ENCODE measurements at regions of chr18 and their contacts with region 1.

Region 1: GRCh38 chr18:13549880-13550232 is 176.5 kb downstream of the FAM210A start:
- DNase-seq: no peak
- H3K4me3 ChIP-seq: no peak overlapping the region
- H3K27ac ChIP-seq: peak overlapping the region in 1 of 2 donors; percentile 9
- H3K4me1 ChIP-seq: peaks cover 6 to 19% of the 10 kb centered on the region in 2 donors
- H3K27me3 ChIP-seq: no peaks in the 10 kb centered on the region
- CTCF ChIP-seq: no peak

Region 2: DNA sequence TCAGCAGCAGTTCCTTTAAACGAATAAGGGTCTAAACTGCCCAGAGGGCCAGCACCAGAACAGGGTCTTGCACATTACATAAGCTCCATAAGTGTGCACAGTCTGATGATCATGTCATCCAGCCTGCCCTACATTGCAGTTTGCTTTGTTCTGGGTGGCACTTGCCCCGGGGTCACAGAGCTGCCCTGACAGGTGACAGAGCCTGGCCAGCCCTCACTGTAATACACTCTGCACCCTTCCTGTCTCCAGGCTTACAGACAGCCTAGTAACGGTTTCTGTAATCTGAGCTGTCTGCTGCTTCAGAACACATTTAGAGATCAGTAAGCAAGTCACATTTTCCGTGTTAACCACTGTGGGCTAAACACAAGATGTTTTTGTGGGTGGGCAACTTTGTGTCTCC is 36.8 kb before region 1 on chr18:
- intact Hi-C with region 1: no loop called
- DNase-seq: peak in 1 of 2 donors; percentile 58
- H3K4me3 ChIP-seq: no peak overlapping the region
- H3K27ac ChIP-seq: peak overlapping the region in 1 of 2 donors; percentile 17
- H3K4me1 ChIP-seq: peaks cover 0 to 14% of the 10 kb centered on the region in 2 donors
- H3K27me3 ChIP-seq: no peaks in the 10 kb centered on the region
- CTCF ChIP-seq: no peak

Region 3: DNA sequence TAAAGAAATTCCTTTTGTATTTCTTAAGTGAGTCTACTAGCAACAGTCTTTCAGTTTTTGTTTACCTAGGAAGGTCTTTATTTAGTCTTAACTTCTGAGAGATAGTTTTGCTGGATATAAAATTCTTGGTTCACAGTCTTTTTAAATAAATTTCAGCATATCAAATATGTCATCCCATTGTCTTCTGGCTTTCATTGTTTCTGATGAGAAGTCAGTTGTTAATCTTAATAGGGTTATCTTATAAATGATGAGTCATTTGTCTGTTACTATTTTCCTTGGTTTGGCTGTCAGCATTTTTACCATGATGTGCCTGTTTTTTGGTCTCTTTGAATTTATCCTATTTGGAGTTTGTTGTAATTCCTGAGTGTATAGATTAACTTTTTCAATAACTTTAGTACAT is 47.2 kb after region 1 on chr18:
- intact Hi-C with region 1: no loop called
- DNase-seq: no peak
- H3K4me3 ChIP-seq: no peak overlapping the region
- H3K27ac ChIP-seq: no peak overlapping the region
- H3K4me1 ChIP-seq: no peaks in the 10 kb centered on the region
- H3K27me3 ChIP-seq: no peaks in the 10 kb centered on the region
- CTCF ChIP-seq: no peak

Region 4: DNA sequence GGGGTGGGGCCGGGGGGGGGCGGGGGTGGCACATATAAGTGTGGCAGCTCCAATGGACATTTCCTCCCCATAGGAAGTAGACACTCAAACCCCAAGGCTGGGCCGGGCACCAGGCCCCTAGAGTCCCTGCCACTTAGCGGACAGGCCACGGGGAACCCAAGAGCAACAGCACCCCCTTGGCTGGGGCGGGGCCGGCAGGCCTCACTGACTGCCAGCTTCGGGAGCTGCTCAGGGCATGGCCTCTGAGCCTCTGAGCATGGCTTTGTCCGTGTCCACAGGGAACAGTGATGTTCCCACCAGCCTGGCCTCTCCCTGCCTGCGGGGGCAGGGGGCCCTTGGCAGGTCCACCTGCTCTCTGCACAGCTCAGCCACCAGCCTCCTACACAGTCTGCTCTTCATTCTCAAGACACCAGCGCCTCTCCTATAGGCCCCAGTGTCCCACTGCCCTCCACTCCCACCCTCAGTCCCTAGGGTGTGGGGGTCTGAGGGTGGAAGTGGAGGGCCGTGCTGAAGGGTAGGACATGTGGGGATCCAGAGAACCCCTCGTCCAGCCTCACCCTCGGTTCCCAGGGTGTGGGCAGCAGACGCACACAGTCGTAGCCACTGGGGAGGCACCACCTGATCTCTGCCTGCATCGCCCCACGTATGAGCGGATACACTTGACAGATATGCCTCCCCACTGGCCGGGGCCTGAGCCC is 69.8 kb after region 1 on chr18:
- intact Hi-C with region 1: loop called (anchors 5 kb)
- DNase-seq: no peak
- H3K4me3 ChIP-seq: no peak overlapping the region
- H3K27ac ChIP-seq: no peak overlapping the region
- H3K4me1 ChIP-seq: no peaks in the 10 kb centered on the region
- H3K27me3 ChIP-seq: no peaks in the 10 kb centered on the region
- CTCF ChIP-seq: no peak